GM10248 (cell line): ENCODE measurements at regions of chr3 and their contacts with region 1.

Region 1: DNA sequence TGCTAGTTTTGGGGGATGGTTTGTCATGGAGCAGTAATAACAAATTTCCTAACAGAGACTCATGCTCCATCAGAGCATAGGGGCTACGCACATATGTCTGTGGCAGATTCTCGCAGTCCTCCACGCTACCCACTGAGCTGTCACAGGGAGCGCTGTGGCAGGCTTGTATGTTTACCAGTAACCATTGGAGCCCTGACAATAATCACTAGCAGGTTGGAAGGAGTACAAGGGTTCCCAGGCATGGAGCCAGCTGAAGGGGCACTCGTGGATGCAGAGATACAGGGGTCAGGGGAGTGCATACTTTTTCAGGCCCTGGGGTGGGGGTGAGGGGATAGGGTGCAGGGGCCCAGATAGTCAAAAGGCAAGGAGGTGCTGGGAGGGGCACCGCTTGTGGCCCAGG is 7.9 kb upstream of the GP9 start:
- DNase-seq: no peak
- CTCF ChIP-seq: no peak

Region 2: DNA sequence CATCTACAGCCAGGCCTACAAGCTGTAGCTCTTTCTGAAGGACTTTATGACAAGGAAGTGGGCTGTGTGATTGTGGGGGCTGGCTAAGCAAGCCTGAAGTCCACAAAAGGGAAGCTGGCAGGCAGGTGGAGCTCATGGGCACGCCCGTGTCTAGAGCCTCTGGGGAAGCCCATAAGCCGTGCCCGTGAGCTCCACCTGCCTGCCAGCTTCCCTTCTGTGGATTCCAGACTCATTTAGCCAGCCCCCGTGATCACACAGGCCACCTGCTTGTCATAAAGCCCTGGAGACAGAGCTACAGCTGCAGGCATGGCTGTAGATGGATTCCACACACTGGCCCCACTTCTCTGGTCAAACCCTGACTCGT is 36.3 kb before region 1 on chr3:
- CTCF ChIA-PET with region 1: interaction called, 44 read pairs
- POLR2A ChIA-PET with region 1: no interaction called
- DNase-seq: peak; percentile 47
- CTCF ChIP-seq: no peak

Region 3: DNA sequence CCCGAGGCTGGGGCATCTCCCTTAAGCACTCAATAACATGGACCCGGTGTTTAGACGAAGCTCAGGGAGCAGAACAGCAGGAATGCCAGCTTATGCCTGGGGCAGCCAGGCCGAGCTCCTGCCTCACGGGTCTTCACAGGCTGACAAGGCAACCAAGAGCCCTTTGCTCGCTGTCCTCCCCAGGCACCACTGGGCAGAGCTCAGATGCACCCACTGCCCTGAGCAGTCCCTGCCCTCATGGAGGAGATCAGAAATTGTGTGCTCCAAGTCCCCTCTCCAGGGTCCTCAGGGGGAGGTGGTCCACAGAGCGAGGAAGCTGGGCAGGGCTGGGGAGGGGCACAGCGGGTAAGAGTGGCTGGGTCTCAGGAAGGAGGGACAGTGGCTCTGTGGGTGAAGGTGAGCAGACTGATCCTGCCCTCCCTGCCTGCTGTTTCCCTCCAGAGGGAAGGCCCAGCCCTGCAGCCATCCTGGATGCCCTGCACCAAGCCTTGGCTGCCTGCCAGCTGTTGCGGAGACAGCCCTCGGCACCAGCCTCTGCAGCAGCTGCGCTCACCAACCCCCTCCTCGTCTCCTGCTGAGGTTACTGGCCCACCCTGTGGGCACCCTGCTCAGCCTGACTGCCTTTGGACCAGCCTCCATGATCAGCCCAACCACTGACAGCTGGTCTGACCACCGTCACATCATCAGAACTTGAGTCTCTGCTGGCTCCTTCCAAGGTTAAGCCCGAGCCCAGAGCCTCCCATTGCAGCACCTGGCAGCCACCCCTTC is 13.2 kb before region 1 on chr3:
- CTCF ChIA-PET with region 1: interaction called, 28 read pairs
- POLR2A ChIA-PET with region 1: no interaction called
- DNase-seq: no peak
- CTCF ChIP-seq: no peak

Region 4: DNA sequence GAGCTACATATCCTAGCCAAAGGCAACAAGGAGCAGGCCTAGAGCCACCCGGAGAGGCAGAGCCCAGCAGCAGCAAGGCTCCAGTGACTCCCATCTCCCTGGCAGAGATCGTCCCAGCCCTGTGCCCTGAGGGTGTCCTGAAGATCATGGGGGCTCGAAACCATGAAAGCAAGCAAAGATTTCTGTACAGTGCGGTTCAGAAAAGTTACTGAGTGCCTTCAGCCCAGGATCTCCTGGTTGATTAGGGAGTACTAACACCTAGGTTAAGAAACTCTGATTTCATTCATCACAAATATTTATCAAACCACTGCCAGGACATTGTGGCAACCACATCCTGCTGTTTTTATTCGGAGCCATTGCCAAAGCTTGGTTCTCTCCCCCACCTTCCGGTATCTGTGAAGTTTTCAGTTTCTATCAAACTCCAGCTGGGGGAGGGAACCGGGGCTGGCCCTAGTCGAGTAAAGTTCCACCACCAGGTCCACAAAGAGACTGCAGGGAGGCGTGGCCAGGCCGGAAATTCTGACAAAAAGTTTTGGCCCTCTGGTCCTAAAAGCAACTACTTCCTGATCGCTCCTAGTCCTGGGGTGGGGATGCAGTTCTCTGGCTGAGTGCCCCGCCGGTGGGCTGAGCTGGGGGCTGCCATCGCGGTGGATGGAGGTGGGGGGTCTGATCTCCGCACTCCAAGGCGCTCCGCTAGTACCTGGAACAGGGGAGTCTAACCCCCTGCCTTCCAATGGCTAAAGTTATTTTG is 67.8 kb after region 1 on chr3:
- CTCF ChIA-PET with region 1: interaction called, 39 read pairs
- POLR2A ChIA-PET with region 1: no interaction called
- DNase-seq: peak; percentile 92
- CTCF ChIP-seq: no peak

Region 5: GRCh38 chr3:129240436-129240835 is 187.8 kb after region 1 on chr3:
- CTCF ChIA-PET with region 1: interaction called, 168 read pairs
- POLR2A ChIA-PET with region 1: no interaction called
- DNase-seq: no peak
- CTCF ChIP-seq: no peak

Region 6: GRCh38 chr3:129383292-129383860 is 330.7 kb after region 1 on chr3:
- CTCF ChIA-PET with region 1: no interaction called
- POLR2A ChIA-PET with region 1: no interaction called
- DNase-seq: peak; percentile 80
- CTCF ChIP-seq: peak; percentile 76